Ascending aorta (tissue), 2 donors: ENCODE measurements at regions of chr22 and their contacts with region 1.

Region 1: GRCh38 chr22:46071451-46072109 is 78.7 kb upstream of the PPARA start:
- DNase-seq: peak; percentile 58 to 94
- H3K4me3 ChIP-seq: peak overlapping the region; percentile 80 to 89
- H3K27ac ChIP-seq: peak overlapping the region; percentile 96 to 100
- H3K4me1 ChIP-seq: peaks cover 20 to 42% of the 10 kb centered on the region in 2 donors
- H3K27me3 ChIP-seq: no peaks in the 10 kb centered on the region
- CTCF ChIP-seq: no peak

Region 2: GRCh38 chr22:46013460-46014416 is 57.8 kb before region 1 on chr22:
- intact Hi-C with region 1: loop called (anchors 5 kb)
- DNase-seq: peak; percentile 82 to 97
- H3K4me3 ChIP-seq: peak overlapping the region; percentile 61 to 75
- H3K27ac ChIP-seq: peak overlapping the region; percentile 90 to 99
- H3K4me1 ChIP-seq: peaks cover 0 to 8% of the 10 kb centered on the region in 2 donors
- H3K27me3 ChIP-seq: no peaks in the 10 kb centered on the region
- CTCF ChIP-seq: peak; percentile 62 to 77 (median 65)

Region 3: DNA sequence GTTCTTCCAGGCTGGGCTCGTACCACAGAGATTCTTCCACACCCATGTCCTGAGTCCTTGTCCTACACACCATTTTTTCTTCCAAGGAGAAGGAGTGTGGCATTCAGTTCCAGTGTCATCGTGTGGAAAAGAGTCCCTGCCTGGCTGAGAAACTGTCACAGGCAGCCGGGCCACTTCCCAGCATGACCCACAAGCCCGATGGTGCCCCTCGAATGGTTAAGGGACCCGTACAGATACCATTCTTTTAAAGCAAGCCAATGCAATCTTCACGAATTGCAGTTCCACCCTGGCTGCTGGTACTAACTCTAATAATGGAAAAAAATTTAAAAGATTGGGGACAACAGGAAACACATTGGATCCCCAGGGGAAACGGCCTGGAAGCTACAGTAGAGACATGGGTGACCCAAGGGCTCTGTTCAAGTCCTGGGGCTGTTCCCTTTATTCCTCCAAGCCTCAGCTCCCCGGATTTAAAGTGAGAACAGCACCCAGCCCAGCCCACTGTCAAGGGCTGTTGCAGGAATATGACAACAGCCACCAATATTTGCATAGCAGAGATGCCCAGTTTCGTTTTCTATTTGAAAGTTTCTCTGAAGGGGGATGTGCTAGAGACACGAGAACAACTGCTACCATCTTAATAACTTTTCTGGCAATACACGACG is 13.7 kb before region 1 on chr22:
- intact Hi-C with region 1: loop called (anchors 2 kb)
- DNase-seq: peak; percentile 29 to 78
- H3K4me3 ChIP-seq: peak overlapping the region; percentile 73 to 85
- H3K27ac ChIP-seq: peak overlapping the region; percentile 97 to 98
- H3K4me1 ChIP-seq: peaks cover 16 to 55% of the 10 kb centered on the region in 2 donors
- H3K27me3 ChIP-seq: no peaks in the 10 kb centered on the region
- CTCF ChIP-seq: no peak

Region 4: GRCh38 chr22:46087336-46088277 is 16.0 kb after region 1 on chr22:
- intact Hi-C with region 1: loop called (anchors 2 kb)
- DNase-seq: peak; percentile 81 to 96
- H3K4me3 ChIP-seq: peak overlapping the region; percentile 32 to 40
- H3K27ac ChIP-seq: peak overlapping the region; percentile 96 to 100
- H3K4me1 ChIP-seq: peaks cover 46 to 95% of the 10 kb centered on the region in 2 donors
- H3K27me3 ChIP-seq: no peaks in the 10 kb centered on the region
- CTCF ChIP-seq: no peak

Region 5: DNA sequence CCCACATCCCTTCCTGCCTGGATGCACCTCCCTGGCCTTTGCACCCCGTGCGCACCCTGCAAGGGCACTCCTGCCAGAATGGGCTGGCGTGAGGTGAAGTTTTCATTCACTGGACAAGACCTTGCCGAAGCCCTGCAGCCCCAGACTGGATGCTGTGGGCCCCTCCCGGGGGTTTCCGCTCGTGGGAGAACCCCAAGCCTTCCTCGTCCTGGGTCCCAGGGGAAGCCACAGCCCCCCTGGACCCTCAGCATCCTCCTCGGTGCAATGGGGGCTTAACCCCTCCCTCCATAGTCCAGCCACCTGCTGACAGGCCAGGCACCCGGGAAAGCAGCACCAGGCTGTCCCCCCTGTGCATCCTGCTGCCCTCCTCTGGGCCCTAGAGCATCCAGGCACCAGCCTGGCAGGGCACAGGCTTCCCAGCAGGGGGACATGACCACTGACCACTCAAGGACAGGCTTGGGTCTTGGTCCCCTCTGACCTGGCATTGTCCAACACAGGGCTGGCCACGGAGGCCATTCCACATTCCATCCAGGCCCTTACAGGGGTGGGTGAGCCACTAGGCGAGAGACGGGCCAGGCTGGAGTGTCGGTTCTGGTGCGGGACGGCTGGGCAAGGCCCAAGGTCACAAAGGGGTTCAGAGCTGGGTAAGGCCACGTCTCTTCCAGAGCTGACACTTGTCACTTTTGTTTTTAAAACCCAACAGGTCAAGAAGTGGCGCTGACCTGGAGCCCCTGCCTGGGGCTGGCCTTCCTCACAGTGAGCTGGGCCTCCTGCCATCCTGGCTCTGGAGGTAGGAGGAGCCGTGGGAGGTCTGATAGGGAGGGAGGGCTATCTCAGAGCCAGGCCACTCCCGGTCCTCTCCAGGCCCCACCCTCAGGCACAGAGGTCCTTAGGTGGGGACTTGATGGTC is 37.2 kb after region 1 on chr22:
- intact Hi-C with region 1: loop called (anchors 2 kb)
- DNase-seq: no peak
- H3K4me3 ChIP-seq: no peak overlapping the region
- H3K27ac ChIP-seq: peak overlapping the region; percentile 94 to 100
- H3K4me1 ChIP-seq: peaks cover 60 to 92% of the 10 kb centered on the region in 2 donors
- H3K27me3 ChIP-seq: no peaks in the 10 kb centered on the region
- CTCF ChIP-seq: no peak

Region 6: GRCh38 chr22:46309526-46310085 is 238.0 kb after region 1 on chr22:
- intact Hi-C with region 1: no loop called
- DNase-seq: no peak
- H3K4me3 ChIP-seq: no peak overlapping the region
- H3K27ac ChIP-seq: no peak overlapping the region
- H3K4me1 ChIP-seq: no peaks in the 10 kb centered on the region
- H3K27me3 ChIP-seq: no peaks in the 10 kb centered on the region
- CTCF ChIP-seq: no peak

Region 7: GRCh38 chr22:46415776-46416519 is 344.4 kb after region 1 on chr22:
- intact Hi-C with region 1: no loop called
- DNase-seq: no peak
- H3K4me3 ChIP-seq: no peak overlapping the region
- H3K27ac ChIP-seq: no peak overlapping the region
- H3K4me1 ChIP-seq: no peaks in the 10 kb centered on the region
- H3K27me3 ChIP-seq: no peaks in the 10 kb centered on the region
- CTCF ChIP-seq: no peak